Caco-2 (cell line): ENCODE measurements at regions of chr4 and their contacts with region 1.

Region 1: GRCh38 chr4:89657931-89658700 is 178.8 kb downstream of the SNCA start:
- DNase-seq: peak in 1 of 2 experiments; percentile 19
- H3K4me3 ChIP-seq: no peak overlapping the region
- H3K4me3 Mint-ChIP-seq: no peak overlapping the region
- H3K27ac Mint-ChIP-seq: no peak overlapping the region
- H3K4me1 ChIP-seq: no peaks in the 10 kb centered on the region
- H3K4me1 Mint-ChIP-seq: peaks cover 9% of the 10 kb centered on the region
- H3K27me3 ChIP-seq: no peaks in the 10 kb centered on the region
- H3K27me3 Mint-ChIP-seq: no peaks in the 10 kb centered on the region
- CTCF ChIP-seq: peak; percentile 15 to 47

Region 2: DNA sequence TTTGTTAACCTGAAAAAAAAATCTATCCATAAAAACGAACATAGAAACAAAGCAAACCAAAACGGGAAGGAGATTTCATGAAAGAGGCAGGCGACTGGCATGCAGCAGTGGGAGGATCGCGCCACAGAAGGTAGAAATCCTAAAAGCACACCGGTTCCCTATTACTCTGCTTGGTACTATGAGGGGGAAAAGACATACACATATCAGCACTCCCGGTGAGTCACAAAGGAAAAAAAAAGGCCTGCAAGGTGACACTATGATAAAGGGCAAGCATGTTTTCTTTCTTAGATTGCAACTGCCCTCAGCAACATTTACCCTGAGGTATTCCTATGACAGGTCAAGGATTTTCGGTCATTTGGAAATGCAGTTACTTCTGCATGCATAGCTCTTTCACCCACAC is 899.8 kb before region 1 on chr4:
- CTCF ChIA-PET with region 1: no interaction called
- POLR2A ChIA-PET with region 1: no interaction called
- intact Hi-C with region 1: no loop called
- DNase-seq: no peak
- H3K4me3 ChIP-seq: no peak overlapping the region
- H3K4me3 Mint-ChIP-seq: no peak overlapping the region
- H3K27ac Mint-ChIP-seq: no peak overlapping the region
- H3K4me1 ChIP-seq: peaks cover 20% of the 10 kb centered on the region
- H3K4me1 Mint-ChIP-seq: peaks cover 10% of the 10 kb centered on the region
- H3K27me3 ChIP-seq: no peaks in the 10 kb centered on the region
- H3K27me3 Mint-ChIP-seq: no peaks in the 10 kb centered on the region
- CTCF ChIP-seq: no peak

Region 3: DNA sequence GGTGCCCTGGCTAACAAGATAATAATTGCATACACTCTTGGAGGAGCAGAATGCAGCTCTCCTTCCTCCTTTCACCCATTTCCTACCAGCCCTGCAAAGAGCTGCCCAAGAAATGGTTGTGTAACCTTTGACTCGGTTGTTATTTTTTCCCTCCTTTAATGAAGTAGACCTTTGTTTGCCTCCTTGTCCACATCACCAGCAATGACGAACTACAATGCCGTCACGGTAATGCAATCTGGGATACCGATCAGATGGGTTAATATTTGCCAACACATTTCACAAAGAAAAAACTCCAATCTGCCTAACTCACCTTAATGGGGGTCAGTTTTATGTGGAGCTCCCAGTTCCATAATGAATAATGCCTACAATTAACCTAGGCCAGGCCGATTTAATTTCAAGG is 382.5 kb before region 1 on chr4:
- CTCF ChIA-PET with region 1: no interaction called
- POLR2A ChIA-PET with region 1: no interaction called
- intact Hi-C with region 1: no loop called
- DNase-seq: no peak
- H3K4me3 ChIP-seq: no peak overlapping the region
- H3K4me3 Mint-ChIP-seq: no peak overlapping the region
- H3K27ac Mint-ChIP-seq: no peak overlapping the region
- H3K4me1 ChIP-seq: no peaks in the 10 kb centered on the region
- H3K4me1 Mint-ChIP-seq: no peaks in the 10 kb centered on the region
- H3K27me3 ChIP-seq: no peaks in the 10 kb centered on the region
- H3K27me3 Mint-ChIP-seq: peaks cover 3% of the 10 kb centered on the region
- CTCF ChIP-seq: no peak

Region 4: DNA sequence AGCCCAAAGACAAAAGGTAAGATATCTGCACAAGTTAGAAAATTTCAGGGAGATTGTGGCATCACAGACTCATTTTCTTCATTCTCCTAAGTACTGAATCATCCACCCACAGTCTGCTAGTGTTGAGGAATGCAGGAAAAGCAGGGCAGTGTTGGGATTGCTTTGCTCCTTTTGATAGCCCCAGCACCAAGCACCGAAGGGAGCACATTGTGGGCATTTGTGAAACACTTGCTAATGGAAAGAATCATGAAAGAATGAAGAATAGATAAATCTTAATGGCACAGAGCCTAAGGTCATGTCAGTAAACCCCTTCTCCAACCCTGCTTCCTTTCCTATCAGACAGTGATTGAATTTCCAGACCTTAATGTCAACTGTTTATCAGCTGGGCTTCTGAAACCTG is 247.4 kb before region 1 on chr4:
- CTCF ChIA-PET with region 1: no interaction called
- POLR2A ChIA-PET with region 1: no interaction called
- intact Hi-C with region 1: no loop called
- DNase-seq: no peak
- H3K4me3 ChIP-seq: no peak overlapping the region
- H3K4me3 Mint-ChIP-seq: no peak overlapping the region
- H3K27ac Mint-ChIP-seq: no peak overlapping the region
- H3K4me1 ChIP-seq: no peaks in the 10 kb centered on the region
- H3K4me1 Mint-ChIP-seq: no peaks in the 10 kb centered on the region
- H3K27me3 ChIP-seq: no peaks in the 10 kb centered on the region
- H3K27me3 Mint-ChIP-seq: peaks cover 8% of the 10 kb centered on the region
- CTCF ChIP-seq: no peak

Region 5: GRCh38 chr4:89700769-89701423 is 42.8 kb after region 1 on chr4:
- CTCF ChIA-PET with region 1: no interaction called
- POLR2A ChIA-PET with region 1: no interaction called
- intact Hi-C with region 1: loop called (anchors 5 kb)
- DNase-seq: no peak
- H3K4me3 ChIP-seq: no peak overlapping the region
- H3K4me3 Mint-ChIP-seq: no peak overlapping the region
- H3K27ac Mint-ChIP-seq: no peak overlapping the region
- H3K4me1 ChIP-seq: no peaks in the 10 kb centered on the region
- H3K4me1 Mint-ChIP-seq: no peaks in the 10 kb centered on the region
- H3K27me3 ChIP-seq: no peaks in the 10 kb centered on the region
- H3K27me3 Mint-ChIP-seq: no peaks in the 10 kb centered on the region
- CTCF ChIP-seq: no peak

Region 6: DNA sequence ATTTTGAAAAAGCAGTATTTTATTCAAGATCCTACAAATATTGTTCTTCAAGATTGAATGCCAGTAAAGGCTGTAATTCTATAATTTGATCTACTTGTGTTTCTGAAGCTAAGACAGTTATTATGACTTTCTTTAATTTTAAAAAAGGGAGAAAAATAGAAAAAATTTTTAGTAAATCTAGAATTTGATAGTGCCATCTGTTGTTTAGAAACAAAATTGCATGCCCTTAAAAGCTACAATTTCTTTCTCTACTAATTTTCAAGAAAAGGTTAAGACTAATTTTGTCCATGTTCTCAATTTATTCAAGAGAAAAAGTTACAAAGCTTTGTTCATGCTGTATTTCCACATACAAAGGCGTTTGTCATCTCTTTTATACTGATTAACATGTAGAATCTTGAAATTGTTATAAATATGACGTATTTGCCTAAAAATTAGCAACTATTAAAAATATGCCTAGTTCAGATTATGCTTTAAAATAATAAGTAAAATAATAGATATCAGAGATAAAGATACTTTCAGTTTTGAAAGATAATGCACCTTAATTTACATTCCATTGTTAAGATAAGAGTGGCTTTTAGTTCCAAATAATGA is 211.0 kb after region 1 on chr4:
- CTCF ChIA-PET with region 1: no interaction called
- POLR2A ChIA-PET with region 1: no interaction called
- intact Hi-C with region 1: loop called (anchors 2 kb)
- DNase-seq: no peak
- H3K4me3 ChIP-seq: no peak overlapping the region
- H3K4me3 Mint-ChIP-seq: no peak overlapping the region
- H3K27ac Mint-ChIP-seq: no peak overlapping the region
- H3K4me1 ChIP-seq: peaks cover 5% of the 10 kb centered on the region; the same call in 1 of the 2 replicates
- H3K4me1 Mint-ChIP-seq: peaks cover 6% of the 10 kb centered on the region
- H3K27me3 ChIP-seq: no peaks in the 10 kb centered on the region
- H3K27me3 Mint-ChIP-seq: no peaks in the 10 kb centered on the region
- CTCF ChIP-seq: peak in 1 of 2 experiments; percentile 49